Adrenal gland (tissue), 19 donors: ENCODE measurements at regions of chr18 and their contacts with region 1.

Region 1: GRCh38 chr18:74368901-74369705 is 53.5 kb downstream of the C18orf63 start:
- DNase-seq: no peak
- H3K4me3 ChIP-seq: no peak overlapping the region
- H3K27ac ChIP-seq: no peak overlapping the region
- H3K4me1 ChIP-seq: no peaks in the 10 kb centered on the region
- H3K27me3 ChIP-seq: no peaks in the 10 kb centered on the region
- CTCF ChIP-seq: no peak
- POLR2A ChIP-seq: no peak

Region 2: GRCh38 chr18:74551936-74552555 is 182.9 kb after region 1 on chr18:
- intact Hi-C with region 1: loop called in 1 of 2 experiments (anchors 10 kb)
- DNase-seq: peak; percentile 71 to 94 (median 87)
- H3K4me3 ChIP-seq: no peak overlapping the region
- H3K27ac ChIP-seq: no peak overlapping the region
- H3K4me1 ChIP-seq: peaks cover 0 to 2% of the 10 kb centered on the region in 2 donors
- H3K27me3 ChIP-seq: peaks cover 8% of the 10 kb centered on the region
- CTCF ChIP-seq: peak; percentile 64 to 85 (median 76)
- POLR2A ChIP-seq: no peak